ENCODE measurements at regions of chr6 and their contacts with region 1.

Region 1: DNA sequence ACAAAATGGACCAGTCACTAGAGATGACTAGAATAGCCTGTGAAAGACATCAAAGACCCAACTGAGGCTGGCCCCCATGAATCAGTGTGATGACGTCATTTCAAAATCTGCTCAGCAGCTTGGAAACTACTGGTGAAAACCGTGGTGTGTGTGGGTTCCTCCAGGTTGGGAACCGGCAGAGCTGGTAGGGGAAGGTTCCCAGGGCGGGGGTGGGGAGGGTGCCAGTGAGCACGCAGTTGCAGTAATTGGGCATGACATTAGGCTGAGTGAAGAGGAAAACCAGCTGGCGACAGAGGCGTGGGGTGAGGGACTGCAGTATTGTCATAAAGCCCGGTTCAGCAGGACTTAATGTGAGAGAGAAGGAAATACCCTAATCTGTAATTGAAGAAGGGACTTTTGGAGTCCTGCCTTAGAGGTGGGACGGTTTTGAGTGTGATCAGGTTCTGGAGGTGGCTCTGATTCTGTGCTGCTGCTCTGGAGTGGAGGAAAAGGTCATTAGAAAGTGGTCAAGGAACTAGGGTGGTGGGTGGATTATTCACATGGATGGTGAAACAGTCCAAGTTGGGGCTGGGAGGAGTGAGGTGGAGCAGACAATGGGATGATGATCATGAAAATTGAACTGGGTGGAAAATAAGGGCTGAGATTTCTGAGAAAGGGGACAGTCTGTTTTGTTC is 52.0 kb upstream of the MTHFD1L start:
- DNase-seq: no peak
- H3K4me3 ChIP-seq: no peak overlapping the region
- H3K27ac ChIP-seq: no peak overlapping the region
- H3K4me1 ChIP-seq: no peaks in the 10 kb centered on the region
- H3K27me3 ChIP-seq: peaks cover 0 to 5% (median 0%) of the 10 kb centered on the region in 5 experiments

Region 2: GRCh38 chr6:150409576-150410066 is 403.8 kb before region 1 on chr6:
- CTCF ChIA-PET with region 1: interaction called, 25 read pairs
- POLR2A ChIA-PET with region 1: no interaction called
- DNase-seq: peak; percentile 40 to 85 (median 80)
- H3K4me3 ChIP-seq: no peak overlapping the region
- H3K27ac ChIP-seq: no peak overlapping the region
- H3K4me1 ChIP-seq: peaks cover 0 to 7% (median 3%) of the 10 kb centered on the region in 4 experiments
- H3K27me3 ChIP-seq: peaks cover 0 to 11% (median 9%) of the 10 kb centered on the region in 5 experiments

Region 3: DNA sequence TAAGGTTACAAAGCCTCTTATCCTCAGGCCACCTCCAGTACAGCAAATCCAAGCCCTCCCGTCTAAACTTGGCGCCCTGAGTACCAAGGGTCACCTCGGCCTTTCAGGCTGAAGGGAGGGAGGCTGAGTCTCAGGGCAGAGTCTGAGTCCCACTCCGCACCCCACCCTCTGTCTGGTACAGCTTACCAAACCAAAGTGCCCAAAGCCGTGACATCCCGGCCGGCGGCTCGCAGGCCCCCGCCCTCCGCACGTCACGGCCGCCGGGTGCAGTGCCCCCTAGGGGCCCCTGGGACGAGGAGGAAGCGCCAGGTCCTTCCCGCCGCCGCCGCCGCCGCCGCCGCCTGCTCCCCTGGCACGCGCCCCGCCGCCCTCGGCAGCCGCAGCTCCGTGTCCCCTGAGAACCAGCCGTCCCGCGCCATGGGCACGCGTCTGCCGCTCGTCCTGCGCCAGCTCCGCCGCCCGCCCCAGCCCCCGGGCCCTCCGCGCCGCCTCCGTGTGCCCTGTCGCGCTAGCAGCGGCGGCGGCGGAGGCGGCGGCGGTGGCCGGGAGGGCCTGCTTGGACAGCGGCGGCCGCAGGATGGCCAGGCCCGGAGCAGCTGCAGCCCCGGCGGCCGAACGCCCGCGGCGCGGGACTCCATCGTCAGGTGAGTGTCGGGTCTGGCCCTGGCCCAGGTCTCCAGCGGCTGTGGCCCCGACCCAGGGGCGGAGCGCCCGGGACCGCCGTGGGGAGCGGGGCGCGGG is 52.1 kb after region 1 on chr6 and contains the start of gene MTHFD1L:
- CTCF ChIA-PET with region 1: interaction called, 50 read pairs
- POLR2A ChIA-PET with region 1: no interaction called
- DNase-seq: peak; percentile 74 to 80 (median 77)
- H3K4me3 ChIP-seq: peak within 1 kb of the TSS; percentile 54 to 91 (median 77)
- H3K27ac ChIP-seq: peak within 1 kb of the TSS in 1 of 2 experiments; percentile 58
- H3K4me1 ChIP-seq: peaks cover 6 to 42% (median 34%) of the 10 kb centered on the region in 4 experiments
- H3K27me3 ChIP-seq: no peaks in the 10 kb centered on the region

Region 4: DNA sequence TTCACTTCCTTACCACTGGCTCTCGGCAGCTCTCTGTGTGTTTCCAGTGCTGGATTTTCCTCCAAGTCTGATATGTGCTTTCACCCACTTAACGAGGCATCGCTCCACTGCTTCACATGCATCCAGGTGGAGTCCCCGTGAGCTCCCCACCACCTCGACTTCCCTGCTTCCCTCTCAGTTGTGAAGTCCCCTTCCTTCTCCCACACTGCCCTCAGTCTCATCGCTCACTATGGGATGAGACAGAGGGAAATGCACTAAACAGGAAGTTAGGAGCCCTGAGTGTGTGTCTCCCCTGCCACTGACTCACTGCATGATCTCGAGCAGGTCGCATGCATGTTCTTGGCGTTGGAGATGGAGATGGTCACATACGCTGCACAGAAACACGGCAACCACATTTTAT is 136.1 kb after region 1 on chr6:
- CTCF ChIA-PET with region 1: no interaction called
- POLR2A ChIA-PET with region 1: no interaction called
- DNase-seq: no peak
- H3K4me3 ChIP-seq: no peak overlapping the region
- H3K27ac ChIP-seq: no peak overlapping the region
- H3K4me1 ChIP-seq: no peaks in the 10 kb centered on the region
- H3K27me3 ChIP-seq: no peaks in the 10 kb centered on the region

Measured in common myeloid progenitor, CD34-positive (primary cell).